Ovary (tissue), 10 donors: ENCODE measurements at regions of chr5 and their contacts with region 1.

Region 1: DNA sequence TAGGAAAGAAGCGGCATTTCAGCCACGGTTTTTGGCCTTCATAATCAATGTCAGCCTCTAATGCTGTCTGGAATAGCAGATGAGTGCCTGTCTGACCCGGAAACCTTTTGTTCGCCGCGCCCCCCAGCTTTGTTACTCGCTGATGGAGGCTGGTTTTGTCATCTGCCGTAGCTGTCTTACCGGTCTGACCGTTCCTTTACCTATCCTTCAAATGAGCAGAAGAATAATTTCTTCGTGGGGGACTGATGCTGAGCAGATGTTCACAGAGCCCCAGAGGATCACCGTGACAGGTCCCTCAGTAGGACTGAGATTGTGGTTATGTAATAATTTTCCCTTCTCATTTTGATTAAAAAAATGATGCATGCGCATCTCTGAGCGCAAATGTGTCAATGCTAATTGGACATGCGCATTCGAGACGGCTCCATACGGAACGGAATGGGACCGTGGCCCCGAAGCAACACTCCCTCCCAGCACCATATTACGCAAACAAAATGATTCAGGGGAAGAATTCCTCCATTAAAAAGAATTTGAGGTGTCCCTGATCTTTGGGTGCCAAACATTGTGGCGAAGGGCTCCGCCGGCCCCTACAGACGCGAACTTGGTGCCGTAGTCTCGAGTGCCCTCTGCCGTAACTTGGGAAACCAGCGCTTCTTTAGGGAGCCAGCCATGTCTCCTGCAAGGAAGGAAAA is 27.6 kb downstream of the TLX3 start:
- DNase-seq: peak in 1 of 5 donors; percentile 37
- H3K4me3 ChIP-seq: peak overlapping the region; percentile 22
- H3K27ac ChIP-seq: no peak overlapping the region
- H3K4me1 ChIP-seq: no peaks in the 10 kb centered on the region
- H3K27me3 ChIP-seq: no peaks in the 10 kb centered on the region
- CTCF ChIP-seq: no peak
- EP300 ChIP-seq: no peak
- POLR2A ChIP-seq: no peak

Region 2: DNA sequence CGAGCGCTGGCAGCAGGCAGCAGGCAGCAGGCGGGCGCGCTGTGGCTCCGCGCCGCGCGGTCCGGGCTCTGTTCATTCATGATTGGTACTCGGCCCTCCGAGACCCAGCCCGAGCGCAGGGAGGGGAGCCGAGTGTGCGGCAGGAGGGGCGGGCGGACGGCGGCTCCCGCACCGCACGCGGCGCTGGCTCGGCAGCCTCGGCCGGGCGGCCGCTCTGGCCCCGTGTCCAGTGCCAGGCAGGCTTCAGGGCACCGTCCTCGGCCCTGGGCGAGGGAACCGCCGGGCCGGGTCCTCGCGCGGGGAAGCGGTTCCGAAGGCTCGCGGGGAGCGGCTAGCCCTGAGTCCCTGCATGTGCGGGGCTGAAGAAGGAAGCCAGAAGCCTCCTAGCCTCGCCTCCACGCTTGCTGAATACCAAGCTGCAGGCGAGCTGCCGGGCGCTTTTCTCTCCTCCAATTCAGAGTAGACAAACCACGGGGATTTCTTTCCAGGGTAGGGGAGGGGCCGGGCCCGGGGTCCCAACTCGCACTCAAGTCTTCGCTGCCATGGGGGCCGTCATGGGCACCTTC is 832.6 kb before region 1 on chr5:
- intact Hi-C with region 1: loop called in 1 of 4 experiments (anchors 10 kb)
- DNase-seq: peak in 1 of 5 donors; percentile 44
- H3K4me3 ChIP-seq: no peak overlapping the region
- H3K27ac ChIP-seq: no peak overlapping the region
- H3K4me1 ChIP-seq: no peaks in the 10 kb centered on the region
- H3K27me3 ChIP-seq: no peaks in the 10 kb centered on the region
- CTCF ChIP-seq: no peak
- EP300 ChIP-seq: no peak
- POLR2A ChIP-seq: no peak

Region 3: DNA sequence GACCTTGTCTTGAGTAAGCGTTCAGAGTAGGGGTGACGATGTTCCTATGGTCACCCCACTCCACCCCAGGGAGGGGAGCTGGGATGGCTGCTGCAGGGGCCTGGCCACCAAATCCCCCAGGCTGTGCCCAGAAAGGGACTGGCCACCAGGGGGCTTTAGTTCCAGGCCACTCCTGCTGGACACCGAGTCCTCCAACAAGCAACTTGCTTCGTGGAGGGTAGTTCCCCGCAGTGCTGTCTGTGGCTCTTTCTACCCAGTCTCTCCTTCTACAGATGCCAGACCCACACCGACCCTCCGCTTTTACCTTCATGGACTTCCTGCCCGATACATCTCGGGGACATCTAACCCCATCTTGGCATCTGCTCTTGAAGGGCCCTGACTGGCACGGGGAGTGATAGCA is 588.8 kb before region 1 on chr5:
- intact Hi-C with region 1: loop called in 1 of 4 experiments (anchors 10 kb)
- DNase-seq: no peak
- H3K4me3 ChIP-seq: no peak overlapping the region
- H3K27ac ChIP-seq: no peak overlapping the region
- H3K4me1 ChIP-seq: no peaks in the 10 kb centered on the region
- H3K27me3 ChIP-seq: no peaks in the 10 kb centered on the region
- CTCF ChIP-seq: no peak
- EP300 ChIP-seq: no peak
- POLR2A ChIP-seq: no peak